ENCODE measurements at regions of chr2 and their contacts with region 1.

Region 1: GRCh38 chr2:181104512-181105115 is 124.2 kb downstream of the UBE2E3 start:
- DNase-seq: no peak
- H3K4me3 Mint-ChIP-seq: no peak overlapping the region
- H3K27ac Mint-ChIP-seq: peak overlapping the region; percentile 34
- H3K4me1 Mint-ChIP-seq: peaks cover 51% of the 10 kb centered on the region
- H3K27me3 Mint-ChIP-seq: no peaks in the 10 kb centered on the region

Region 2: GRCh38 chr2:180722551-180723239 is 381.9 kb before region 1 on chr2:
- intact Hi-C with region 1: no loop called
- DNase-seq: no peak
- H3K4me3 Mint-ChIP-seq: no peak overlapping the region
- H3K27ac Mint-ChIP-seq: no peak overlapping the region
- H3K4me1 Mint-ChIP-seq: no peaks in the 10 kb centered on the region
- H3K27me3 Mint-ChIP-seq: no peaks in the 10 kb centered on the region

Region 3: GRCh38 chr2:181123798-181124231 is 19.2 kb after region 1 on chr2:
- intact Hi-C with region 1: loop called (anchors 1 kb)
- DNase-seq: peak; percentile 74
- H3K4me3 Mint-ChIP-seq: peak overlapping the region; percentile 76
- H3K27ac Mint-ChIP-seq: peak overlapping the region; percentile 95
- H3K4me1 Mint-ChIP-seq: peaks cover 61% of the 10 kb centered on the region
- H3K27me3 Mint-ChIP-seq: no peaks in the 10 kb centered on the region

Region 4: GRCh38 chr2:181178823-181179412 is 74.3 kb after region 1 on chr2:
- intact Hi-C with region 1: loop called (anchors 1 kb)
- DNase-seq: no peak
- H3K4me3 Mint-ChIP-seq: no peak overlapping the region
- H3K27ac Mint-ChIP-seq: peak overlapping the region; percentile 86
- H3K4me1 Mint-ChIP-seq: peaks cover 53% of the 10 kb centered on the region
- H3K27me3 Mint-ChIP-seq: no peaks in the 10 kb centered on the region

Region 5: GRCh38 chr2:181239201-181239799 is 134.7 kb after region 1 on chr2:
- intact Hi-C with region 1: loop called (anchors 2 kb)
- DNase-seq: no peak
- H3K4me3 Mint-ChIP-seq: no peak overlapping the region
- H3K27ac Mint-ChIP-seq: no peak overlapping the region
- H3K4me1 Mint-ChIP-seq: peaks cover 76% of the 10 kb centered on the region
- H3K27me3 Mint-ChIP-seq: no peaks in the 10 kb centered on the region

Region 6: DNA sequence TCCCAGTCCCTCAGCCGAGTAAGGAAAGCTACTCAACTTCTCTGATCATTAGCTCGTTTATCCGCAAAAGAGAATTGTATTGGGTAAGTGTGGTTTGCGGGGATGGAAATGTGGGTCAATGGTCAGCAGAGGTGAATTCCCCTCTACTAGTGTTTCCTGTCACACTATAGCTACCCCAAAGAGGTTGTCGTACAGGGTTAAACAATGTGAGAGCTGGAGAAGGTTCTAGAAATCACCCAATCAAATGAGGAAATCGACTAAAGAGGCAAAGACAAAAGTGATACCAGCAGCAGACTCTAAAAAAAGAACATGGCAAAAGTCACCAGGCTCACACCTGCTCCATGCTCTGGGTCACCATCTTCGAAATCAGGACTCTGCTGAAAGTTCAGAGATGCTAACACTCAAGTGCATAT is 207.9 kb after region 1 on chr2:
- intact Hi-C with region 1: loop called (anchors 2 kb)
- DNase-seq: peak; percentile 34
- H3K4me3 Mint-ChIP-seq: peak overlapping the region; percentile 82
- H3K27ac Mint-ChIP-seq: peak overlapping the region; percentile 98
- H3K4me1 Mint-ChIP-seq: peaks cover 62% of the 10 kb centered on the region
- H3K27me3 Mint-ChIP-seq: no peaks in the 10 kb centered on the region

Region 7: GRCh38 chr2:181466661-181467576 is 362.3 kb after region 1 on chr2:
- intact Hi-C with region 1: loop called (anchors 1 kb)
- DNase-seq: peak; percentile 61
- H3K4me3 Mint-ChIP-seq: peak overlapping the region; percentile 34
- H3K27ac Mint-ChIP-seq: peak overlapping the region; percentile 70
- H3K4me1 Mint-ChIP-seq: peaks cover 77% of the 10 kb centered on the region
- H3K27me3 Mint-ChIP-seq: no peaks in the 10 kb centered on the region

Region 8: GRCh38 chr2:181715033-181715630 is 610.5 kb after region 1 on chr2:
- intact Hi-C with region 1: loop called (anchors 2 kb)
- DNase-seq: peak; percentile 54
- H3K4me3 Mint-ChIP-seq: no peak overlapping the region
- H3K27ac Mint-ChIP-seq: no peak overlapping the region
- H3K4me1 Mint-ChIP-seq: peaks cover 4% of the 10 kb centered on the region
- H3K27me3 Mint-ChIP-seq: peaks cover 10% of the 10 kb centered on the region

Measured in activated T-helper 2 cell treated with anti-CD3 and anti-CD28 coated beads, Interferon-gamma antibody, Interleukin-2, Interleukin-4, amounts not matched to agents 10 μg/mL and 5 μg/mL and 100 μg/mL, durations not matched to agents 14 hours and 24 hours and 36 hours (primary cell).